ENCODE measurements at regions of chr3 and their contacts with region 1.

Region 1: GRCh38 chr3:195909644-195910508 is 1.5 kb upstream of the TNK2 start:
- DNase-seq: peak; percentile 81 to 82
- H3K4me3 ChIP-seq: peak overlapping the region in 1 of 3 donors; percentile 51
- H3K27ac ChIP-seq: peak overlapping the region in 1 of 3 donors; percentile 17
- H3K4me1 ChIP-seq: peaks cover 35 to 40% of the 10 kb centered on the region in 2 donors
- H3K27me3 ChIP-seq: no peaks in the 10 kb centered on the region
- CTCF ChIP-seq: no peak
- POLR2A ChIP-seq: peak; percentile 3 to 62

Region 2: DNA sequence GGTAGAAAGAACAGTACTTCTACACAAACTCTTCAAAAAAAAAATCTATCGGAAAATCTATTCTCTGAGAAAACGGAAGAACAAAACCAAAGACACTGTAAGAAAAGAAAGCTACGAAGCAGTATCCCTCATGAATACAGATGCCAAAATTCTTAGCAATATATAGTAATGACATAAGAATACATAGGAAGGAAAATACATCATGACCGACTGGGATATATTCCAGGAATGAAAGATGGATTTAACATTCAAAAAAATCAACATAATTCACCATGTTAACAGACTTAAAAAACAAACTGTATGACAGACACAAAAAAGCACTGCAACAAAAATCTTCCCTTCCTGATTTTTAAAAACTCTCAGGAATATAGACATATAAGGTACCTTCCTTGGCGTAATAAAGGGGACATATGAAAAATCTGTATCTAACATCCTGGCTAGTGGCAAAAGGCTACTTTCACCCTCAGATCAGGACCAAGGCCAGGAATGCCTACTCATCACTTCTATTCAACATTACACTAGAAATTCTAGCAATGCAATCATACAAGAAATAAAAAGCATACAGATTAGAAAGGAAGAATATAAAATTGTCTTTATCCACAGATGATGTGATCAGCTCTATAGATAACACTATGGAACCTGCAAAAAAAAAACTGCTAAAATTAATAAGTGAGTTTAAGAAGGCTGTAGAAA is 561.3 kb before region 1 on chr3:
- intact Hi-C with region 1: no loop called
- DNase-seq: no peak
- H3K4me3 ChIP-seq: no peak overlapping the region
- H3K27ac ChIP-seq: no peak overlapping the region
- H3K4me1 ChIP-seq: no peaks in the 10 kb centered on the region
- H3K27me3 ChIP-seq: no peaks in the 10 kb centered on the region
- CTCF ChIP-seq: no peak
- POLR2A ChIP-seq: no peak

Region 3: DNA sequence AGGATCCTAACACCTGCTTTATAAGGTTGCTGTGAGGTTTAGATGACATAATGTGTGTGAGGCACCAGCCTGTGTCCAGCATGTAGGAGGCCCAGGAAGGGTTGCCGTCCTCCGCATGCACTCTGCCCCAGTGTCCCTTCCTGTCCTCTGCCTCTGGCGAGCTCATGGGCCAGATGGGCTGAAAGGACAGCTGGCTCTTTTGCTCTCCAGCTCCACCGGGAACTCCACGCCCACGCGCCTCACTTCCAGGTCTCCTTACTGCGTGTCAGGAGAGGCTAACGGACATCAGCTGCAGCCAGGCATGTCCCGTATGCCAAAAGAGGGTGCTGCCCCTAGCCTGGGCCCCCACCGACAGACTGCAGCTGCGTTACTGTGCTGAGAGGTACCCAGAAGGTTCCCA is 176.9 kb before region 1 on chr3:
- intact Hi-C with region 1: no loop called
- DNase-seq: no peak
- H3K4me3 ChIP-seq: no peak overlapping the region
- H3K27ac ChIP-seq: no peak overlapping the region
- H3K4me1 ChIP-seq: no peaks in the 10 kb centered on the region
- H3K27me3 ChIP-seq: no peaks in the 10 kb centered on the region
- CTCF ChIP-seq: no peak
- POLR2A ChIP-seq: no peak

Region 4: DNA sequence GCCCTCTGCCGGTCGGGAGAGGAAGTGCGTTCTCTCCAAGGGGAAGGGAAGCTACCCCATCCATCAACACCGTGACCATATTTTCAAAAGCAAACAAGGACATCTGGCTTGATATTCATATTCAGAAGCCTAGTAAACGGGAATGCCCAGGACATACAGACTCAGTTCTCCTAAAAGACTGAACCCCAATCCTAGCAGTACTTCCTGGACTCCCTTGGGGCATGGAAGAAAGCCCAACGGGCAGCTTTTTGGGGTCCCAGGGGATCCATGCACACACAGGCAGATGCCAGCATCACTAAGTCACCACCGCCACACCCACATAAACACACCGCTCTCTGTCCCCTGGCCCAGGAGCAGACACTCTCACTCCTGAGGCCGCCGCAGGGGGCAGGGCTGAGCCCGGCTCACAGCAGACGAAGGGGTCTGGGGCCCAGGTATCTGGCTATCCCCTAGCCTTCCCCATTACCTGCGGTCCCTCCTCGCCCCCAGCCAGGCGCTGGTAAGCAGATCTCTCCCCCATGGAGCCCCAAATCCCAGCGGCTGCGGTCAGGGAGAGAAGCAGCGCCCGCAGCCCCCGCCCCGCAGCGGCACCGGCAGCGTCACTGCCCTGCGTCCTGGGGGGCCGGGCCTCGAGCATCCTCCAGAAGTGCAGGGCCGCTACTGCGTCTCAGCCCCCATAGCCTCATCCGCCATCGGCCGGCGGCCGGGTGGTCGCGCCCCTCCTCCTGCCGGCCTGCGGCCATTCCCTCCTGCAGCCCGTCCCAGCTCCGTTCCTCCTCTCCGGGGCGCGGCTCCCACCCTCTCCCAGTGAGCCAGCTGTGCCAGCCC is 14.9 kb before region 1 on chr3:
- intact Hi-C with region 1: loop called (anchors 2 kb)
- DNase-seq: peak; percentile 39 to 49
- H3K4me3 ChIP-seq: peak overlapping the region in 2 of 3 donors; percentile 25 to 54
- H3K27ac ChIP-seq: peak overlapping the region in 2 of 3 donors; percentile 71 to 84
- H3K4me1 ChIP-seq: peaks cover 46 to 59% of the 10 kb centered on the region in 2 donors
- H3K27me3 ChIP-seq: no peaks in the 10 kb centered on the region
- CTCF ChIP-seq: peak; percentile 92 to 98 (median 96)
- POLR2A ChIP-seq: no peak

Region 5: GRCh38 chr3:196093317-196094111 is 183.6 kb after region 1 on chr3:
- intact Hi-C with region 1: no loop called
- DNase-seq: no peak
- H3K4me3 ChIP-seq: no peak overlapping the region
- H3K27ac ChIP-seq: no peak overlapping the region
- H3K4me1 ChIP-seq: peaks cover 7 to 9% of the 10 kb centered on the region in 2 donors
- H3K27me3 ChIP-seq: no peaks in the 10 kb centered on the region
- CTCF ChIP-seq: no peak
- POLR2A ChIP-seq: no peak